Endothelial cell of umbilical vein (primary cell): ENCODE measurements at regions of chr13 and their contacts with region 1.

Region 1: DNA sequence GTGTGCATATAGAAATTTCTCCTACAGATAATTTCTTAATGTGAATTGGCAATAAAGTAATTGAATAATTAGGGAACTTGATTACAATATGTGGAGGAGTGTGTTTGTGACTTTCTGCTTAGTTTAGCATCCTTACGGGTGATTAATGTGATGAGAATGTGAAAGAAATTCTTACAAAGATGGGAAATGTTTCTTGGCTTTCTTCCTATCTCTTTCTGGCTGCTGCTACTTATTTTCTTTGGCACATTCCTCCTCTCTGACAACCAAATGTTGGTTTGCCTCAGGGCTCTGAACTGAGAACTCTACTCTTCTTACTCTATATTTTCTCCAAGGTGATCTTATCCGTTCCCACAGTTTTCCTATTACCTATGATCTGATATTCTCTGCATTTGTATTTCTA is 300.1 kb downstream of the TBC1D4 start:
- DNase-seq: peak; percentile 96
- H3K4me3 ChIP-seq: no peak overlapping the region
- H3K27ac ChIP-seq: peak overlapping the region; percentile 65
- H3K4me1 ChIP-seq: peaks cover 32% of the 10 kb centered on the region
- H3K27me3 ChIP-seq: no peaks in the 10 kb centered on the region
- CTCF ChIP-seq: no peak
- POLR2A ChIP-seq: peak; percentile 59

Region 2: DNA sequence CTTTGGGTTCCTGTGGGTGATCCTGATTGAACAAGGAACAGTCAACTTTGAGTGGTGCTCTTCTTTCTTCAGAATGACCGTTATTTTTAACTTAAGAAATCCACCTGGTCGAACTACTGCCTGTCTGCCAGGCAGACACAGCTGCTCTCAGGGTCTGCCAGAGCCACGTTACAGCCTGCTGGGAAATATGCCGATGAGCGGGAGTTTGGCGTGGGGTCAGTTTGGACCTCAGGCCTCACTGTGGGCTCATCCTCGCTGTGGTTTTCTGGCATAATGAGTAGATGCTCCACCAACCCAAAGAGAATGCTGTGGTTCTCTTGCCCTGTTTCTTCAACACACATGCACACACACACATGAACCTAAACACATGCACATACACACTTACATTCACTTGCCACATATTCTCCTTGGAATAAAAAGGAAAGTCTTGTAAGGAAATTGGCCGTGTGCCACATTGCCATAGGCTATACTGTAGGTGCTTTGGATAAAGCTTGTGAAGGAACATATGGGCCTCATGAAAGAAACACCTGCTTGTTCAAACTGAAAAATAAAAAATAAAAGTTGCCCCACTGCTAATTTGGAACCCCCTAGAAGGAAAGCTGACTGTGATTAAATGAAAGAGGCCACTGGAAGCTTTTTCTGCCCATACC is 449.0 kb before region 1 on chr13:
- CTCF ChIA-PET with region 1: no interaction called
- POLR2A ChIA-PET with region 1: no interaction called
- dilution Hi-C with region 1: no loop called
- intact Hi-C with region 1: loop called (anchors 1 kb)
- DNase-seq: no peak
- H3K4me3 ChIP-seq: no peak overlapping the region
- H3K27ac ChIP-seq: no peak overlapping the region
- H3K4me1 ChIP-seq: peaks cover 15% of the 10 kb centered on the region
- H3K27me3 ChIP-seq: no peaks in the 10 kb centered on the region
- CTCF ChIP-seq: no peak
- POLR2A ChIP-seq: no peak

Region 3: GRCh38 chr13:74871369-74872070 is 310.4 kb before region 1 on chr13:
- CTCF ChIA-PET with region 1: no interaction called
- POLR2A ChIA-PET with region 1: no interaction called
- dilution Hi-C with region 1: no loop called
- intact Hi-C with region 1: loop called (anchors 5 kb)
- DNase-seq: peak; percentile 54
- H3K4me3 ChIP-seq: no peak overlapping the region
- H3K27ac ChIP-seq: peak overlapping the region; percentile 37
- H3K4me1 ChIP-seq: peaks cover 32% of the 10 kb centered on the region
- H3K27me3 ChIP-seq: no peaks in the 10 kb centered on the region
- CTCF ChIP-seq: no peak
- POLR2A ChIP-seq: no peak

Region 4: DNA sequence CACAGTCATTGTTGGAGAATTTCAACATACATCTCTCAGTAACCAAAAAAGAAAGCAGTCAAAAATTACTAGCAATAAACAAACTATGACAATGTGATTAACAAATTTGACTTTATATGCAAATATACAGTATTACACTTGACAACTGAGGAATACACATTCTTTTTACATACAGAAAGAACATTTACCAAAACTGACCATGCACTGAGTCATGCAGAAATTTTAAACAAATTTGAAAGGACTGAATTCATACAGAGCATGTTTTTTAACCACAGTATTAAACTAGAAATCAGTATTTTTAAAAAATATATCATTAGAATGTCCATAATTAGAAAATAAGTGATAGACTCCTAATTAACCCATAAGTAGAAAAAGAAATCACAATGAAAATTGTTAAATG is 120.0 kb before region 1 on chr13:
- CTCF ChIA-PET with region 1: no interaction called
- POLR2A ChIA-PET with region 1: no interaction called
- dilution Hi-C with region 1: no loop called
- intact Hi-C with region 1: no loop called
- DNase-seq: no peak
- H3K4me3 ChIP-seq: no peak overlapping the region
- H3K27ac ChIP-seq: no peak overlapping the region
- H3K4me1 ChIP-seq: no peaks in the 10 kb centered on the region
- H3K27me3 ChIP-seq: no peaks in the 10 kb centered on the region
- CTCF ChIP-seq: no peak
- POLR2A ChIP-seq: no peak

Region 5: GRCh38 chr13:75135325-75135825 is 46.5 kb before region 1 on chr13:
- CTCF ChIA-PET with region 1: no interaction called
- POLR2A ChIA-PET with region 1: no interaction called
- dilution Hi-C with region 1: no loop called
- intact Hi-C with region 1: loop called (anchors 1 kb)
- DNase-seq: peak; percentile 78
- H3K4me3 ChIP-seq: no peak overlapping the region
- H3K27ac ChIP-seq: peak overlapping the region; percentile 52
- H3K4me1 ChIP-seq: peaks cover 7% of the 10 kb centered on the region
- H3K27me3 ChIP-seq: no peaks in the 10 kb centered on the region
- CTCF ChIP-seq: no peak
- POLR2A ChIP-seq: no peak